ENCODE measurements at regions of chr1 and their contacts with region 1.

Region 1: GRCh38 chr1:114511032-114511785 is at the start of gene TRIM33:
- DNase-seq: peak; percentile 95
- H3K4me3 Mint-ChIP-seq: peak within 1 kb of the TSS; percentile 91
- H3K27ac Mint-ChIP-seq: peak within 1 kb of the TSS; percentile 98
- H3K4me1 Mint-ChIP-seq: peaks cover 41% of the 10 kb centered on the region
- H3K27me3 Mint-ChIP-seq: no peaks in the 10 kb centered on the region
- total RNA-seq, gene TRIM33: 26.9 to 27.9 TPM

Region 2: DNA sequence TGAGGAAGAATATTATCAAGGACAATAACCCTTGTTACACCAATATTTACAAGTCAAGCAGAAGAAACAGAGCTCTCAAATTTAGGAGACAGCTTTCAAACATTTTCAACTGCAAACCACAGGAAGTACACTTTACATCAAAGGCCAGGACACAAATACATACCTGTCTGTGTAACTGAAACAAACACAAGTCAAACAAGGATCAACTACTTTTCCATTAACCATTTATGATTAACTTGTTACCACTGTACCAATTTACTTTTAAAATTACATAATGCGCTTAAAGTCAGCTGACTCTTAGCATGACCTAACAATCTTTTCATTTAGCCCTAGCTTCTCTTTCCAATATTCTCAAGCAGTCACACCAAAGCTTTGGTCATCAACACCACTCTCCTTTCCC is 43.7 kb before region 1 on chr1:
- CTCF ChIA-PET with region 1: interaction called, 3 read pairs
- POLR2A ChIA-PET with region 1: interaction called, 5 read pairs
- intact Hi-C with region 1: loop called (anchors 5 kb)
- DNase-seq: no peak
- H3K4me3 Mint-ChIP-seq: no peak overlapping the region
- H3K27ac Mint-ChIP-seq: peak overlapping the region; percentile 59
- H3K4me1 Mint-ChIP-seq: peaks cover 52% of the 10 kb centered on the region
- H3K27me3 Mint-ChIP-seq: no peaks in the 10 kb centered on the region

Region 3: DNA sequence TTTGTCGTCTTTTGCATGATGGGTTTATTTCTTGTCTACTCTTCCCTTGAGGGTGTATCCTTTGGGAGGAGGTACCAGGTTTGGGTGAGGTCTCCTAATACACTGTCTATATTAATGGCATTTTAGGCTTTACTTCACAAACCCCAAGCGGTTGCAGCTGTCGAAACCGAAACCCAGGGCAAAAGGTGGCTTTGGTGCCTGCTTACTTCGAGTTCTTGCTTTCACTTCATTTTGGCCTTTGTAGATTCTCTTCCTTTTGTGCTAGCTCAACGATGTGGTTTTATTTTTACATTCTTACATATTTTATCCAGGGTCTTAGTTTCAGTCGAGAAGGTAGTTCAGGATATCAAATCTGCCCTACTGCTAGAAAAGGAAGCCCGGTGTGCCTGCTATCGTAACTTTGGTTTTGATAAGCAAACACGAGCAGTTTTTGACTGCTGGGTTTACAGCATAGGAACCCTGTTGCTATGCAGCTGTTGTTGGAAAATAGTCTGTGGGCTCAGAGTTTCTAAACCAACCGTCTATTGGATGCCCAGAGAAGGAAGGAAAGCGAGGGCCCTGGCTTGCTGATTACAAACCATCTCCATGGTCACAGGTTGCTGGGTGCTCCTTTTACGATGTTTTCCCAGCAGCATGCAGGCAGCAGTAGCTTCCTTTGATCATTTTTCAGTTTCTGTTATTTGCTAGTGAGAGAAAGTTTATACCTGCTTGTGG is 587.9 kb after region 1 on chr1:
- CTCF ChIA-PET with region 1: no interaction called
- POLR2A ChIA-PET with region 1: no interaction called
- intact Hi-C with region 1: loop called (anchors 10 kb)
- DNase-seq: peak; percentile 78
- H3K4me3 Mint-ChIP-seq: peak overlapping the region; percentile 80
- H3K27ac Mint-ChIP-seq: peak overlapping the region; percentile 85
- H3K4me1 Mint-ChIP-seq: peaks cover 47% of the 10 kb centered on the region
- H3K27me3 Mint-ChIP-seq: no peaks in the 10 kb centered on the region

Measured in activated CD4-positive, alpha-beta memory T cell treated with anti-CD3 and anti-CD28 coated beads for 36 hours (primary cell).